ENCODE measurements at regions of chr4 and their contacts with region 1.

Region 1: DNA sequence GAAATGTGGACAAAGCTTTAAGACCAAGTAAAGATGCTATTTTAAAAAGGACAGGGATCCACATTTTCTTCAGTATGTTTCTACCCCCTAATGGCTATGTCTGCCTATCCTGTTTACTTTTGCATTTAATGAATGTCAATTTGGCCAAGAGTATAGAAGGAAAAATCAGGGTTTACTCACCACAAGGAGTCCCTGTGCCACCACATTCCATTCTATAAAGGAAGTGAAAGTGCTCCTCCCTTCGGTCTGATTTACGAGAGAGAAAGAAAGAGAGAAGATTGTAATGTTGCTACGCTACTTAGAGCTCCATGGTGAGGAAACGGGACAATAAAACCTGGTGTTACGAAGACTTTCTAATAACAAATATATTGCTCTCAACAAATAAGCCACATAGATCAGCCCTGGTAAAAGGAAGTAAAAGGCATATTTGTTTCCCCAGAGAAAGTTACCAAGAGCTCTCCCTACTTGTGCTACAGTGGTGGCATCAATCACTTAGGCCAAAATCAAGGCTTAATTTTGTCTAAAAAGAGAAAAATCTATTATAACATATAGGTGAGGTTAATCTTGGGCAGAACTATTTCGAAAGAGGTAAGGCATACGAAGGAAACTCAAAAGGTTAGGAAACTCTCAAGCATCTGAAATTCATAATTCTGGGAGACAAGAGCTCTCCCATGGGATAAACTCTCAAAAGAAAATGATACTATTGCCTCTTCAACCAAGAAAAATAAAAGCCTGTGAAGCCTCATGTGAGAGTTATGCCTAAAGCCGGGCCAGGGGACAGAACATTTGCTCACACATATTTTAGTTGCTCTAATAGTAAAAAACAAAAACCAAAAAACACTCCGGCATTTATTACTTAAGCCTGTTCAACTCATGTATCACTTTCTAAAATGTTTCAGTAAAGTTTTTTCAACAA is 29.5 kb downstream of the TAPT1 start:
- DNase-seq: peak; percentile 83
- H3K4me3 ChIP-seq: peak overlapping the region in 2 of 3 experiments; percentile 34 to 67
- H3K27ac ChIP-seq: peak overlapping the region; percentile 68
- H3K4me1 ChIP-seq: peaks cover 27% of the 10 kb centered on the region
- H3K27me3 ChIP-seq: no peaks in the 10 kb centered on the region
- CTCF ChIP-seq: peak; percentile 28 to 32
- POLR2A ChIP-seq: no peak

Region 2: GRCh38 chr4:15868111-15868510 is 328.6 kb before region 1 on chr4:
- CTCF ChIA-PET with region 1: no interaction called
- POLR2A ChIA-PET with region 1: no interaction called
- dilution Hi-C with region 1: no loop called
- intact Hi-C with region 1: no loop called
- DNase-seq: no peak
- H3K4me3 ChIP-seq: no peak overlapping the region
- H3K27ac ChIP-seq: no peak overlapping the region
- H3K4me1 ChIP-seq: no peaks in the 10 kb centered on the region
- H3K27me3 ChIP-seq: peaks cover 0 to 3% of the 10 kb centered on the region in 2 experiments
- CTCF ChIP-seq: no peak
- POLR2A ChIP-seq: no peak

Region 3: GRCh38 chr4:16082426-16083240 is 114.1 kb before region 1 on chr4:
- CTCF ChIA-PET with region 1: interaction called, 3 read pairs
- POLR2A ChIA-PET with region 1: no interaction called
- dilution Hi-C with region 1: no loop called
- intact Hi-C with region 1: loop called (anchors 2 kb)
- DNase-seq: peak; percentile 30
- H3K4me3 ChIP-seq: peak overlapping the region; percentile 5 to 36 (median 34)
- H3K27ac ChIP-seq: no peak overlapping the region
- H3K4me1 ChIP-seq: peaks cover 6% of the 10 kb centered on the region
- H3K27me3 ChIP-seq: peaks cover 55 to 58% of the 10 kb centered on the region in 2 experiments
- CTCF ChIP-seq: no peak
- POLR2A ChIP-seq: no peak

Region 4: DNA sequence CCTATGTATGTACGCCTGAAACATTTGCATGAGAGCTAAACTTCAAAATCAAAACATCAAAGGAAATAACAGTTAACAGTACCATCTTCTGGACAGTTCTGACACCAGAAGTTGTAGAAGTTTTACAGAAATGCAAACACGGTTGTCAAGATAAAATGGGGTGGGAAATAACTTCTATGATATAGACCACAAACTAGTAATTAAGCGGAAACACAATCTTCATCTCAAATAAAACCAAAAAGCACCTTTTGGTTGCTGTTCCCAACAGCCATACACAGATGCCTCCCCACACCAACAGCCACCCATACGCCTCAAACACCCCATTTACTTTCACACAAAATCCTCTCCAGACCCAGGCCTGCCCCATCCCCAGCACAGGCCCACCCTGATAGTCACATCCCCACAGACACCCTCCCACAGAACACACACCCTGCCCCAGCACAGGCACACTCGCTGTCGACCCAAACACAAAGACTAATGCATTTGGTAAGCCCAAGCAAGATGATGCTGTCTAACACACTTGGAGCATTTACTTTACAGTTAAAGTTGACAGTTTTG is 34.8 kb before region 1 on chr4:
- CTCF ChIA-PET with region 1: interaction called, 9 read pairs
- POLR2A ChIA-PET with region 1: no interaction called
- dilution Hi-C with region 1: no loop called
- intact Hi-C with region 1: loop called (anchors 2 kb)
- DNase-seq: peak; percentile 9
- H3K4me3 ChIP-seq: no peak overlapping the region
- H3K27ac ChIP-seq: no peak overlapping the region
- H3K4me1 ChIP-seq: peaks cover 23% of the 10 kb centered on the region
- H3K27me3 ChIP-seq: no peaks in the 10 kb centered on the region
- CTCF ChIP-seq: no peak
- POLR2A ChIP-seq: no peak